ENCODE measurements at regions of chr7 and their contacts with region 1.

Region 1: GRCh38 chr7:77439572-77439971 is 23.4 kb upstream of the GSAP start:
- DNase-seq: peak; percentile 72
- ATAC-seq: peak; percentile 99
- H3K4me3 ChIP-seq: no peak overlapping the region
- H3K27ac ChIP-seq: no peak overlapping the region
- H3K4me1 ChIP-seq: peaks cover 32% of the 10 kb centered on the region
- H3K27me3 ChIP-seq: no peaks in the 10 kb centered on the region
- CTCF ChIP-seq: peak; percentile 86
- EP300 ChIP-seq: peak in 1 of 2 experiments; percentile 21; a peak in 1 of 4 replicates
- POLR2A ChIP-seq: no peak
- RAD21 ChIP-seq: peak; percentile 86

Region 2: GRCh38 chr7:77416623-77417371 is 22.8 kb before region 1 on chr7:
- CTCF ChIA-PET with region 1: no interaction called
- POLR2A ChIA-PET with region 1: no interaction called
- in situ Hi-C with region 1: no loop called
- intact Hi-C with region 1: no loop called
- DNase-seq: no peak
- ATAC-seq: peak; percentile 42
- H3K4me3 ChIP-seq: peak overlapping the region; percentile 68 to 86 (median 81)
- H3K27ac ChIP-seq: peak overlapping the region; percentile 94
- H3K4me1 ChIP-seq: peaks cover 64% of the 10 kb centered on the region
- H3K27me3 ChIP-seq: no peaks in the 10 kb centered on the region
- CTCF ChIP-seq: peak; percentile 27; the same call in 1 of the 2 replicates
- EP300 ChIP-seq: no peak
- POLR2A ChIP-seq: no peak
- RAD21 ChIP-seq: 0 out of 2 replicates have a peak, but pooled peaks have one; percentile 47

Region 3: DNA sequence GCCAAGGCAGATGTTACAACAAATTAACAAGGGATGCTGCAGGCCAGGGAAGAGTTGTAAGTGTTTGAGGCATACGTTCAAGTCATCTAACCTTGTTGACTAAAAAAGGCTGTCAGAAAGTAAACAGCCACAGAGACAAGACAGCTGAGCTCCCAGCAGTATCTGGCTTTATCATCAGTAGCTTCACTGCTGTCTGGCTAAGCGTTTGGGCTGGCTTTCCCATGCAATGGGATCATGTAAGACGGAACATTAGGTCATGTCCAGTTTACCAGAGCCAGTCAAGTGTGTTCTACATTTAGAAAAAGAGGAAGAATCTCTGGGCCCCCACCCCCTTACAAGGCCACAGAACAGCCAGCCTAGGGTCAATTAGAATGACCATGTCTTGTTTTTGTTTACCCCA is 27.8 kb after region 1 on chr7:
- CTCF ChIA-PET with region 1: no interaction called
- POLR2A ChIA-PET with region 1: no interaction called
- in situ Hi-C with region 1: no loop called
- intact Hi-C with region 1: no loop called
- DNase-seq: no peak
- ATAC-seq: no peak
- H3K4me3 ChIP-seq: no peak overlapping the region
- H3K27ac ChIP-seq: no peak overlapping the region
- H3K4me1 ChIP-seq: peaks cover 11% of the 10 kb centered on the region
- H3K27me3 ChIP-seq: no peaks in the 10 kb centered on the region
- CTCF ChIP-seq: no peak
- EP300 ChIP-seq: no peak
- POLR2A ChIP-seq: no peak
- RAD21 ChIP-seq: no peak

Region 4: GRCh38 chr7:77600952-77601351 is 161.4 kb after region 1 on chr7:
- CTCF ChIA-PET with region 1: no interaction called
- POLR2A ChIA-PET with region 1: no interaction called
- in situ Hi-C with region 1: no loop called
- intact Hi-C with region 1: loop called (anchors 5 kb)
- DNase-seq: no peak
- ATAC-seq: no peak
- H3K4me3 ChIP-seq: no peak overlapping the region
- H3K27ac ChIP-seq: no peak overlapping the region
- H3K4me1 ChIP-seq: no peaks in the 10 kb centered on the region
- H3K27me3 ChIP-seq: no peaks in the 10 kb centered on the region
- CTCF ChIP-seq: no peak
- EP300 ChIP-seq: no peak
- POLR2A ChIP-seq: no peak
- RAD21 ChIP-seq: no peak

Measured in HepG2 (cell line).